ENCODE measurements at regions of chr12 and their contacts with region 1.

Region 1: GRCh38 chr12:121522971-121523370 is 57.9 kb downstream of the KDM2B start:
- DNase-seq: no peak
- H3K4me3 ChIP-seq: no peak overlapping the region
- H3K27ac ChIP-seq: no peak overlapping the region
- H3K4me1 ChIP-seq: no peaks in the 10 kb centered on the region
- H3K27me3 ChIP-seq: no peaks in the 10 kb centered on the region
- CTCF ChIP-seq: no peak

Region 2: DNA sequence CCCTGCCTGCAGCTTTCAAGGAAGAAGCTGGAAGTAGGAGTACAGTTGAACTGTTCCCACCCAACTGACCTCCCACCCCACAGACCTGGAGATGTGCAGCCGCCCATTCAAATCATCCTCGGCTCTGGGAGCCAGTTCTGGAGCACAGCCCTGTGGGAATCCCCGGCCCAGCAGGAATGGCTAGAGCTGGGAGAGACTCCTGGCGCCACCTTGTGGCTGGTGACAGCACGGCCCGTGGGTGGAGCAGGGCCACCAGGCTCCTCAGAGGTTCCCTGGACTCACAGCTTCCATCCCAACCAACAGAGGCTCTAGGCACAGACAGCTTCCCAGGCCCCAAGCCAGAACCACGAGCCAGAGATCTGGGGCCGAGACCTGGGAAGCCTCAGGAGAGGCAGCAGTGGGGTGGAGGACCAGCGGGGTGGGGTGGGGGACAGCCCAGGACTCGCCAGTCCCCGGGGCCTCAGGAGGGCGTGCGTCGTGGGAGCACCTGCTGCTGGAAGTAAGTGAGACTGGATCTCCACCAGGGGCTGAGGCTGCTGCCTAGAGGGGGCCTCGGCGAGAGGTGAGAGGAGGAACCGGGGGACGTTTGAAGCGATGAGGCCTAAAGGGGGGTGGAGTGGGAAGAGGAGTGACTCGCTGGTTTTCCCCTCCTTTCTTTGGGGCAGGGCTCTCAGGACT is 79.6 kb before region 1 on chr12:
- CTCF ChIA-PET with region 1: no interaction called
- dilution Hi-C with region 1: loop called (anchors 5 kb)
- in situ Hi-C with region 1: no loop called
- intact Hi-C with region 1: no loop called
- DNase-seq: peak; percentile 68
- H3K4me3 ChIP-seq: no peak overlapping the region
- H3K27ac ChIP-seq: no peak overlapping the region
- H3K4me1 ChIP-seq: no peaks in the 10 kb centered on the region
- H3K27me3 ChIP-seq: no peaks in the 10 kb centered on the region
- CTCF ChIP-seq: peak; percentile 88 to 96

Region 3: GRCh38 chr12:121472150-121472905 is 50.6 kb before region 1 on chr12:
- CTCF ChIA-PET with region 1: no interaction called
- dilution Hi-C with region 1: loop called (anchors 5 kb)
- in situ Hi-C with region 1: no loop called
- intact Hi-C with region 1: no loop called
- DNase-seq: no peak
- H3K4me3 ChIP-seq: no peak overlapping the region
- H3K27ac ChIP-seq: no peak overlapping the region
- H3K4me1 ChIP-seq: peaks cover 5% of the 10 kb centered on the region
- H3K27me3 ChIP-seq: no peaks in the 10 kb centered on the region
- CTCF ChIP-seq: no peak

Region 4: GRCh38 chr12:121560392-121561008 is 37.5 kb after region 1 on chr12:
- CTCF ChIA-PET with region 1: no interaction called
- dilution Hi-C with region 1: loop called (anchors 5 kb)
- in situ Hi-C with region 1: no loop called
- intact Hi-C with region 1: no loop called
- DNase-seq: no peak
- H3K4me3 ChIP-seq: no peak overlapping the region
- H3K27ac ChIP-seq: no peak overlapping the region
- H3K4me1 ChIP-seq: no peaks in the 10 kb centered on the region
- H3K27me3 ChIP-seq: peaks cover 2% of the 10 kb centered on the region
- CTCF ChIP-seq: no peak

Region 5: GRCh38 chr12:121719926-121720414 is 197.0 kb after region 1 on chr12:
- CTCF ChIA-PET with region 1: no interaction called
- dilution Hi-C with region 1: loop called (anchors 5 kb)
- in situ Hi-C with region 1: no loop called
- intact Hi-C with region 1: no loop called
- DNase-seq: peak; percentile 67
- H3K4me3 ChIP-seq: no peak overlapping the region
- H3K27ac ChIP-seq: no peak overlapping the region
- H3K4me1 ChIP-seq: peaks cover 4% of the 10 kb centered on the region
- H3K27me3 ChIP-seq: no peaks in the 10 kb centered on the region
- CTCF ChIP-seq: no peak

Region 6: DNA sequence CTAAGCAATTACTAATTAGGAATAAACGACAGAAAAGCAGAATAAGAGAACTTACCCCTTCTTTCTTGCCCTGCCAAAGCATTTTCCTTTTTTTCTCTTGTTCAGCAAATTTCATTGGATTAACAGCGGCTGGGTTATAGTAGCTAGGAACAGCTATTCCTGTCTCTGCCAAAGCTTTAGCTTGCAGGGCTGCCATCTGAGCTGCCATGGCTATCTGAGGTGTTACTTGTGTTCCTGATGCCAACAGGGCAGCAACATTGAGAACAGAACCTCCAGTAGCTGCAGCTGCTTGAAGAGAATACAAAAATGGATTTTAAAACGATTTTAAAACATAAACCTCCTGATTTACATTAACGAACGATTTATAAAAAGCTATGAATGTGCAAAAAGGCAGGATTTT is 985.2 kb after region 1 on chr12:
- CTCF ChIA-PET with region 1: no interaction called
- dilution Hi-C with region 1: no loop called
- in situ Hi-C with region 1: no loop called
- intact Hi-C with region 1: no loop called
- DNase-seq: no peak
- H3K4me3 ChIP-seq: no peak overlapping the region
- H3K27ac ChIP-seq: no peak overlapping the region
- H3K4me1 ChIP-seq: no peaks in the 10 kb centered on the region
- H3K27me3 ChIP-seq: no peaks in the 10 kb centered on the region
- CTCF ChIP-seq: no peak